Ovary (tissue), 10 donors: ENCODE measurements at regions of chr3 and their contacts with region 1.

Region 1: GRCh38 chr3:64533617-64534317 is 154.0 kb downstream of the ADAMTS9 start:
- DNase-seq: peak; percentile 90 to 95 (median 93)
- H3K4me3 ChIP-seq: no peak overlapping the region
- H3K27ac ChIP-seq: no peak overlapping the region
- H3K4me1 ChIP-seq: no peaks in the 10 kb centered on the region
- H3K27me3 ChIP-seq: no peaks in the 10 kb centered on the region
- CTCF ChIP-seq: peak; percentile 88 to 92 (median 89)
- EP300 ChIP-seq: no peak
- POLR2A ChIP-seq: no peak

Region 2: DNA sequence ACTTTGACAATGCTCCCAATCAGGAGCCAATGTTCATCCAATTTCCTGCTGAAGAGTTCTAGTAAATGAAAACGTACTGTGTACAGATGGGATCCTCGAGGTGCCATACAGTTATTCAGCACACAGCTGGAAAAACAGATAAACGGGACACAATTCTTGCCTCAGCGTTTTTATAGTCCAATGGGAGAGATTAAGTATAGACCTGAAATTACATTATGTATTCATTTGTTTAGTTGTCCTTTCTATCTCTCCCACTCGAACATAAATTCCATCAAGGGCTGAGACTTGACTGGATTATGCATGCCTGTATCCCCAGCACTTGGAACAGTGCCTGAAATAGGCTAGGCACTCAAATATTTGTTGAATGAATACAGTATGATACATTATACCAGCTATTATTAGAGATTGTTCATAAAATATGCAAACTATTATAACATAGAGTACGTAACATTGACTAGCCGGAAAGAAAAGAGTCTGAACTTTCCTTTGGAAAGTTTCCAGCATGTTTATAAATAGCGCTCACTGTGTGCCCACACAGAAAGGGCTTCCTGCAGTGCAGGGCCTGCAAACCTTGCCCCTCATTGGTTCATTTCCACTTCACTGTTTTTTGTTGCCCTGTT is 908.7 kb before region 1 on chr3:
- intact Hi-C with region 1: no loop called
- DNase-seq: no peak
- H3K4me3 ChIP-seq: no peak overlapping the region
- H3K27ac ChIP-seq: no peak overlapping the region
- H3K4me1 ChIP-seq: no peaks in the 10 kb centered on the region
- H3K27me3 ChIP-seq: no peaks in the 10 kb centered on the region
- CTCF ChIP-seq: no peak
- EP300 ChIP-seq: no peak
- POLR2A ChIP-seq: no peak

Region 3: DNA sequence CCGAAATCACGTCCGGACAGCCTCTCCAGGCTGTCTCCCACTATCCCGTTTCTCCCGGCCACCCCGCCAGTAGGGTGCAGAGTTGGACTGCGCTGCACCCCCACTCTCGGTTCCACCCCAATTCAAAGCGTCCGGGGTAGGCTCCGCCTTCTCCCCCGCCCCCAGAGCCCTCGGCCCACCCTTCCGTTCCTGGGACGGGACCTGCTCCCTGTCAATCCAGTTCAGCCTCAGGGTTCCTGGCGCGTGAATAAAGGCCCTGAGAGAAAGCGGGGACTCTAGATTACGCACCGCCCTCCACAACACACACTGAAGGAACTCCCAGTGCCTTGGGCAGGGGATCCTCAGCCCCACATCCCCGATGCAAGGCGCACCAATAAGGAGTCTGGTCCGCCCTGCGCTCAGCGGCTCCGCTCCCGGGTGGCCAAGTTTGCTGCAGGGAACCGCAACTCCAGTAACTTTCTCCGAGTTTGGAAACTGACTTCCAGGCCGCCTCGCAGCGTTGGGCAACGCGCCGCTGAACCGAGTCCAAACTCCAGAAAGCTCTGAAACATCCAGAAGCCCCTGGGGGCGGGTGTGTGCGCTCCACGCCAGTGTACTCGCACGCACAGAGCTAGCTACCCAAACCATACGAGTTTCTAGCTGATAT is 152.2 kb after region 1 on chr3:
- intact Hi-C with region 1: loop called (anchors 5 to 10 kb)
- DNase-seq: peak; percentile 97 to 98 (median 97)
- H3K4me3 ChIP-seq: peak overlapping the region; percentile 72
- H3K27ac ChIP-seq: peak overlapping the region; percentile 98 to 99
- H3K4me1 ChIP-seq: peaks cover 7% of the 10 kb centered on the region
- H3K27me3 ChIP-seq: no peaks in the 10 kb centered on the region
- CTCF ChIP-seq: peak; percentile 17 to 38 (median 27)
- EP300 ChIP-seq: no peak
- POLR2A ChIP-seq: peak; percentile 88

Region 4: DNA sequence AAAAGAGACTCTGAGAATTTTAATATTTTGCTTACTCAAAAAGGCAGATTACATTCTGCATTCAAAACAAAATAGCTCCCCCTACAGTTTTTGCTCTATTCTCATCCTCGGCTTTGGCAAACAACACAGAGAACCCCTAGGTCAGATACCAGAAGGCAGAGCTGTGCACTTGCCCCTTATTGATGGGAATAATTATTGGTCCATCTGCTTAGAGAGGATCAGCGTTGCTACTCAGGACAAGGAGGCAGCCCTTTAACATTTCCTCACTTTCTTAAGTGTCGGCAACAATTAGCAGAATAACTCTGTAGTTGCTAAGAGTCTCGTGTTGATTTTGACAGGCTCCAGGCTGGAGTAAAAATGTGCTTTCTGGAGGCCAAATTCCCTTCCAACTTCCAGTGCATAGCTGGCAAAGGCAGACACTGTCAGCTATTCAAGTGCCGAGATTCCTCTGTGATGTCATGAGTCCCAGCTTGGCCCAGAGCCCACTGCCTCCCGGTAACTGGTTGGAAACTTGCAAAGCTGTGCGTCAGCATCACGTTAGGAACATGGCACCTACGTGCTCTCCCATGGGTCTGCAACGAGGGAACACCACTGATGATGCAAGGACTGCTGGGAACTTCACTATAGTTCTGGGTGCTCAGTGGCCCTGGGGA is 636.7 kb after region 1 on chr3:
- intact Hi-C with region 1: loop called in 2 of 4 experiments (anchors 5 kb)
- DNase-seq: peak; percentile 71 to 90 (median 87)
- H3K4me3 ChIP-seq: no peak overlapping the region
- H3K27ac ChIP-seq: no peak overlapping the region
- H3K4me1 ChIP-seq: peaks cover 7% of the 10 kb centered on the region
- H3K27me3 ChIP-seq: no peaks in the 10 kb centered on the region
- CTCF ChIP-seq: peak in 2 of 3 donors; percentile 17 to 39
- EP300 ChIP-seq: peak; percentile 100
- POLR2A ChIP-seq: no peak

Region 5: GRCh38 chr3:65245133-65246063 is 711.6 kb after region 1 on chr3:
- intact Hi-C with region 1: loop called (anchors 5 to 10 kb)
- DNase-seq: peak in 2 of 5 donors; percentile 17 to 23
- H3K4me3 ChIP-seq: no peak overlapping the region
- H3K27ac ChIP-seq: no peak overlapping the region
- H3K4me1 ChIP-seq: peaks cover 2% of the 10 kb centered on the region
- H3K27me3 ChIP-seq: no peaks in the 10 kb centered on the region
- CTCF ChIP-seq: peak in 2 of 3 donors; percentile 45 to 63
- EP300 ChIP-seq: no peak
- POLR2A ChIP-seq: no peak

Region 6: DNA sequence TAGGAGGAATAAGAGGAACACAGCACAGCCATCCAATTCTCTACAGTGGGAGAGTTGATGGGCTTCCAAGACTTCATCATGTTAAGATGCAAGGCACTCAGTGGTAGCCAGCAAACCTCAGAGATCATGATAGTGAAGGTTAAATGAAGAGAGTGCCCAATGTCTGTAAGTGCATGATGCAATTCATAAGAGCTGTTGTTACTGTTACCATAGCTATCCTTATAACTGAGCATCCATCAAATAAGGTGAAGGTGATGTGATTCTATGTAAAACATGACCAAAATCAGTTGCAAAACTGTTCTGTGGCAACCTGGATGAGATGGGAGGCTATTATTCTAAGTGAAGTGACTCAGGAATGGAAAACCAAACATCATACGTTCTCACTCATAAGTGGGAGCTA is 1215.3 kb after region 1 on chr3:
- intact Hi-C with region 1: loop called in 1 of 4 experiments (anchors 5 kb)
- DNase-seq: no peak
- H3K4me3 ChIP-seq: no peak overlapping the region
- H3K27ac ChIP-seq: no peak overlapping the region
- H3K4me1 ChIP-seq: no peaks in the 10 kb centered on the region
- H3K27me3 ChIP-seq: no peaks in the 10 kb centered on the region
- CTCF ChIP-seq: no peak
- EP300 ChIP-seq: no peak
- POLR2A ChIP-seq: no peak